ENCODE measurements at regions of chr5 and their contacts with region 1.

Region 1: GRCh38 chr5:87412630-87413342 is at the start of gene CCNH:
- DNase-seq: peak; percentile 98
- ATAC-seq: peak; percentile 99
- H3K4me3 Mint-ChIP-seq: peak within 1 kb of the TSS; percentile 98
- H3K27ac Mint-ChIP-seq: peak within 1 kb of the TSS; percentile 97
- H3K4me1 Mint-ChIP-seq: peaks cover 33% of the 10 kb centered on the region
- H3K27me3 Mint-ChIP-seq: no peaks in the 10 kb centered on the region
- total RNA-seq, gene CCNH: 62.7 to 111 TPM

Region 2: DNA sequence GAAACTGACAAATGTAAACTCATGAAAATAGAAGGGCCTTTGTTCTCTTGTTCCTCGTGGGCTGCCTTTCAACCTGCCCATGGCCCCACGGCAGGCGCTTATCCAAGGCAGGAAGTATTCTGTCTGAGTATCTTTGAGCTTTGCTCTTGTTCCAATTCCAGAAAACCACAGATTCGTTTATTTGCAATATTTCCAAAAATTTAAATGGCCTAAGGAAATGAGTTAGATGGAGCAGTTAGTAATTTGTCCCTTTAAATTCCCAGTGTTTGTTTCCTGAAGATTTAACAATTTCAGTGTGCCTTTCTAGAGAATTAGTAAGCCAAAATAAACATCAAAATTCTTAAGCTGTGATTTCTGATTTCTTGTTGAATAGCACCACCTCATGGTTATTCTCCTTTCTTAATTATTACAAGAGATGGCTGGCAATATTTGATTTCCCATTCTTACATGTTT is 444.5 kb before region 1 on chr5:
- CTCF ChIA-PET with region 1: no interaction called
- POLR2A ChIA-PET with region 1: no interaction called
- intact Hi-C with region 1: loop called in 1 of 2 experiments (anchors 5 kb)
- DNase-seq: no peak
- ATAC-seq: no peak
- H3K4me3 Mint-ChIP-seq: no peak overlapping the region
- H3K27ac Mint-ChIP-seq: no peak overlapping the region
- H3K4me1 Mint-ChIP-seq: peaks cover 2% of the 10 kb centered on the region
- H3K27me3 Mint-ChIP-seq: peaks cover 10% of the 10 kb centered on the region

Region 3: DNA sequence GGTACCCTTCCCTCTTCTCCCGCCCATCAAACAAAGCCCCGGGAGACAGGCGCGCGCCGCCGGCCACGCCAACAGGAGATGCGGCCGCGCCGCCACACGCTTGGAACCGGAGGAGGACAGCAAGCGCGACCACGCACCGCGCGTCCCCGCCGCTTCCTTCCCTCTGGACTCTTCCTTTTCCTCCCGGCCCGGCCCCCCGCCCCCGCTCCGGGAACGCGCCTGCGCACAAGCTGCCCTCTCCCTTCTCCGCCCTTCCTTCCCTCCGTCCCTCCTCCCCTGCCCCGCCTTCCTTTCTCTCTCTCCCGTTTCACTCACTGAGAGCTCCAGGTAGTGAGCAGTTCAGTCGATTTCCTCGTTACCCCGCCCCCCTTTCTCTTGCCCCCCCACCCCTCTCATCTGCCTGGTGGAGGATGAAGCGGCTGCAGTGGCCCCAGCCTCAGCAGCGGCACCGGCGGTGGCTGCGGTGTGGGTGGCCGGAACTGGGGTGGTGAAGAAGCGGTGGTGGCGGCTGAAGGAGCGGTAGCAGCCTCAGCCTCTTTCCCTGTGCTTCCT is 145.1 kb before region 1 on chr5 and contains the start of gene RASA1:
- CTCF ChIA-PET with region 1: interaction called, 3 read pairs
- POLR2A ChIA-PET with region 1: interaction called, 5 read pairs
- intact Hi-C with region 1: loop called (anchors 1 to 2 kb)
- DNase-seq: peak; percentile 93
- ATAC-seq: peak; percentile 79
- H3K4me3 Mint-ChIP-seq: peak within 1 kb of the TSS; percentile 100
- H3K27ac Mint-ChIP-seq: peak within 1 kb of the TSS; percentile 98
- H3K4me1 Mint-ChIP-seq: peaks cover 34% of the 10 kb centered on the region
- H3K27me3 Mint-ChIP-seq: no peaks in the 10 kb centered on the region
- total RNA-seq, gene RASA1: 22.6 to 22.9 TPM

Region 4: DNA sequence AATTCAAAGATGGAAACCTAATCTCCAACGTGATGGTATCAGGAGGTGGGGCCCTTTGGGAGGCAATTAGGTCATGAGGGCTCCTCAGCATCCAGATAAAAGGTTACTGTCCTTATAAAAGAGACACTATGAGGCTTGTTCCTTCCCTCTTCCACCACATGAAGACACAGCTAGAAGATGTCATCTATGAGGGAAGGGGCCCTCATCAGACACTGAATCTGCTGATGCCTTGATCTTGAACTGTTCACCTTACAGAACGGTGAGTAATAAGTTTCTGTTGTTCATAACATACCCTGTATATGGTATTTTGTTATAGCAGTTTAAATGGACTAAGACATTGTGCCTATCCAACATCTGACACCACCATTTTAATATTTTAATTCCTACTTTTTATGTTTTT is 19.7 kb after region 1 on chr5:
- CTCF ChIA-PET with region 1: no interaction called
- POLR2A ChIA-PET with region 1: no interaction called
- intact Hi-C with region 1: loop called in 1 of 2 experiments (anchors 1 kb)
- DNase-seq: peak; percentile 11
- ATAC-seq: peak; percentile 90
- H3K4me3 Mint-ChIP-seq: no peak overlapping the region
- H3K27ac Mint-ChIP-seq: no peak overlapping the region
- H3K4me1 Mint-ChIP-seq: peaks cover 5% of the 10 kb centered on the region
- H3K27me3 Mint-ChIP-seq: peaks cover 10% of the 10 kb centered on the region

Region 5: GRCh38 chr5:88268385-88269184 is 855.8 kb after region 1 on chr5 and contains the start of gene TMEM161B:
- CTCF ChIA-PET with region 1: no interaction called
- POLR2A ChIA-PET with region 1: interaction called, 3 read pairs
- intact Hi-C with region 1: loop called (anchors 2 to 10 kb)
- DNase-seq: peak; percentile 96
- ATAC-seq: peak; percentile 98
- H3K4me3 Mint-ChIP-seq: peak within 1 kb of the TSS; percentile 95
- H3K27ac Mint-ChIP-seq: peak within 1 kb of the TSS; percentile 96
- H3K4me1 Mint-ChIP-seq: peaks cover 48% of the 10 kb centered on the region
- H3K27me3 Mint-ChIP-seq: no peaks in the 10 kb centered on the region
- total RNA-seq, gene TMEM161B: 20.1 to 24.0 TPM

Region 6: GRCh38 chr5:88690409-88691229 is 1277.8 kb after region 1 on chr5:
- CTCF ChIA-PET with region 1: no interaction called
- POLR2A ChIA-PET with region 1: no interaction called
- intact Hi-C with region 1: loop called in 1 of 2 experiments (anchors 5 kb)
- DNase-seq: peak; percentile 82
- ATAC-seq: peak; percentile 82
- H3K4me3 Mint-ChIP-seq: peak overlapping the region; percentile 38
- H3K27ac Mint-ChIP-seq: no peak overlapping the region
- H3K4me1 Mint-ChIP-seq: peaks cover 15% of the 10 kb centered on the region
- H3K27me3 Mint-ChIP-seq: peaks cover 84% of the 10 kb centered on the region

Measured in activated CD4-positive, alpha-beta T cell treated with anti-CD3 and anti-CD28 coated beads for 36 hours (primary cell).